ENCODE measurements at regions of chr15 and their contacts with region 1.

Region 1: GRCh38 chr15:79380755-79381497 is 51.2 kb upstream of the MINAR1 start:
- DNase-seq: peak; percentile 78
- ATAC-seq: peak; percentile 70
- H3K4me3 ChIP-seq: no peak overlapping the region
- H3K4me3 Mint-ChIP-seq: no peak overlapping the region
- H3K27ac ChIP-seq: no peak overlapping the region
- H3K27ac Mint-ChIP-seq: no peak overlapping the region
- H3K4me1 ChIP-seq: peaks cover 0 to 4% of the 10 kb centered on the region in 2 donors
- H3K4me1 Mint-ChIP-seq: no peaks in the 10 kb centered on the region
- H3K27me3 ChIP-seq: no peaks in the 10 kb centered on the region
- H3K27me3 Mint-ChIP-seq: no peaks in the 10 kb centered on the region
- CTCF ChIP-seq: peak; percentile 97

Region 2: DNA sequence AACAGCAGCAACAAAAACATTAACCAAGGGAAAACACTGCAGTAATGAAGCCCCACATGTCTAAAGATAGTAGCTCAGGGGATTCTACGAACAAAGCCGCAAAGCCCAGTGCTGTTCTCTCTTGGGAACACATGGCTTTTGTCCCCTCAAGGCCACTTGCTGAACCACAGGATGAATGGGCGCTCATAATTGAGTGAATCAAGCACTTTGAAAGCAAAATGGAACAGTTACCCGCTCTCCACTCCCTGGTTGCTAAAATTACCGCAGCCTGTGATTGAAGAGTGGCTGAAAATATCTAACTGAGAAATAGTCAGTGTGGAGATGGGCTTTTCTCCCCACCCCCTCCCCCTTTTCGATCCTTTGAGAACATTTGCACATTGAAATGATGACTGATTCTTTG is 329.9 kb before region 1 on chr15:
- CTCF ChIA-PET with region 1: no interaction called
- POLR2A ChIA-PET with region 1: no interaction called
- intact Hi-C with region 1: no loop called
- DNase-seq: no peak
- ATAC-seq: no peak
- H3K4me3 ChIP-seq: no peak overlapping the region
- H3K4me3 Mint-ChIP-seq: no peak overlapping the region
- H3K27ac ChIP-seq: no peak overlapping the region
- H3K27ac Mint-ChIP-seq: no peak overlapping the region
- H3K4me1 ChIP-seq: no peaks in the 10 kb centered on the region
- H3K4me1 Mint-ChIP-seq: no peaks in the 10 kb centered on the region
- H3K27me3 ChIP-seq: peaks cover 0 to 4% (median 0%) of the 10 kb centered on the region in 4 experiments
- H3K27me3 Mint-ChIP-seq: peaks cover 14% of the 10 kb centered on the region
- CTCF ChIP-seq: no peak

Region 3: DNA sequence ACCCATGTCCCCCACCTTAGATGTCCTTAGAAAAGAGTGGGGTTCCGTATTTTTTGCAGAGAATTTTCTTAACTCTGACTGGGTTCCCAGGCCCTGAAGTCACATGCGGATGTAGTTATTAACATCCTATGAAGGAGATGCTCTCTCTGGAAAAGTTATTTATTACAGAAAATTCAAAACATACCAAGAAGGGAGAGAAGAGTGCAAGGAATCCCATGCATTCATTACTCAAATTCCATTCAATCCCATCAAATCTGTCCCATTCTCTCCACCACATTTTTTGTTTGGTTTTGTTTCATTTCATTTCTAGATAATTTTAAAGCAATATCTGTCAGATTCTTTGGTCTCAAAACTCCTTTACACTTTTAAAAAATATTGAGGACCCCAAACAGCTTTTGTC is 132.7 kb before region 1 on chr15:
- CTCF ChIA-PET with region 1: no interaction called
- POLR2A ChIA-PET with region 1: no interaction called
- intact Hi-C with region 1: no loop called
- DNase-seq: no peak
- ATAC-seq: no peak
- H3K4me3 ChIP-seq: no peak overlapping the region
- H3K4me3 Mint-ChIP-seq: no peak overlapping the region
- H3K27ac ChIP-seq: no peak overlapping the region
- H3K27ac Mint-ChIP-seq: no peak overlapping the region
- H3K4me1 ChIP-seq: no peaks in the 10 kb centered on the region
- H3K4me1 Mint-ChIP-seq: no peaks in the 10 kb centered on the region
- H3K27me3 ChIP-seq: peaks cover 0 to under 1% (median 0%) of the 10 kb centered on the region in 4 experiments
- H3K27me3 Mint-ChIP-seq: peaks cover 12% of the 10 kb centered on the region
- CTCF ChIP-seq: no peak

Region 4: DNA sequence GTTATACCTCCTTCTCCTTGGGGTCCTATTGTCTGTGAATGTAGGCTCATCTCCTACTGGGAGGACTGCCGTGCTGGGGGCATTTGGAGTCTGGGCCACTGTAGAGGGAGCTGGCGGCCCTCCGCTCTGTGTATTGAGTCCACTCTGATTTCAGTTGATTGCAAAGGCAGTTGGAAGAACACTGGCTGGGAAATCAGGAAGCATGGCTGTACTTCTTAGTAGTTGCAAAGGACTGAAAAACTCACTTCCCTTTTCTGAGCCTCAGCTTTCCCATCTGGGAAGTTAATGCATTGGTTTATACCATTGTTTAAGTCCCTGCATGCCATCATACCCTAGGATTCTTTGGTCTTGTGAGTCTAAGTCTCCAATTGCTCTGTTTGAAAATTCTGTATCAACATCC is 23.4 kb before region 1 on chr15:
- CTCF ChIA-PET with region 1: no interaction called
- POLR2A ChIA-PET with region 1: no interaction called
- intact Hi-C with region 1: no loop called
- DNase-seq: no peak
- ATAC-seq: no peak
- H3K4me3 ChIP-seq: no peak overlapping the region
- H3K4me3 Mint-ChIP-seq: no peak overlapping the region
- H3K27ac ChIP-seq: no peak overlapping the region
- H3K27ac Mint-ChIP-seq: no peak overlapping the region
- H3K4me1 ChIP-seq: no peaks in the 10 kb centered on the region
- H3K4me1 Mint-ChIP-seq: no peaks in the 10 kb centered on the region
- H3K27me3 ChIP-seq: no peaks in the 10 kb centered on the region
- H3K27me3 Mint-ChIP-seq: no peaks in the 10 kb centered on the region
- CTCF ChIP-seq: no peak

Region 5: GRCh38 chr15:79394231-79394630 is 13.3 kb after region 1 on chr15:
- CTCF ChIA-PET with region 1: interaction called, 20 read pairs
- POLR2A ChIA-PET with region 1: no interaction called
- intact Hi-C with region 1: no loop called
- DNase-seq: no peak
- ATAC-seq: no peak
- H3K4me3 ChIP-seq: no peak overlapping the region
- H3K4me3 Mint-ChIP-seq: no peak overlapping the region
- H3K27ac ChIP-seq: no peak overlapping the region
- H3K27ac Mint-ChIP-seq: no peak overlapping the region
- H3K4me1 ChIP-seq: no peaks in the 10 kb centered on the region
- H3K4me1 Mint-ChIP-seq: no peaks in the 10 kb centered on the region
- H3K27me3 ChIP-seq: no peaks in the 10 kb centered on the region
- H3K27me3 Mint-ChIP-seq: no peaks in the 10 kb centered on the region
- CTCF ChIP-seq: no peak

Region 6: GRCh38 chr15:79853458-79854328 is 472.8 kb after region 1 on chr15:
- CTCF ChIA-PET with region 1: interaction called, 85 read pairs
- POLR2A ChIA-PET with region 1: no interaction called
- intact Hi-C with region 1: loop called (anchors 1 kb)
- DNase-seq: peak; percentile 73
- ATAC-seq: peak; percentile 97
- H3K4me3 ChIP-seq: no peak overlapping the region
- H3K4me3 Mint-ChIP-seq: no peak overlapping the region
- H3K27ac ChIP-seq: no peak overlapping the region
- H3K27ac Mint-ChIP-seq: no peak overlapping the region
- H3K4me1 ChIP-seq: peaks cover 7 to 8% of the 10 kb centered on the region in 2 donors
- H3K4me1 Mint-ChIP-seq: peaks cover 29% of the 10 kb centered on the region
- H3K27me3 ChIP-seq: no peaks in the 10 kb centered on the region
- H3K27me3 Mint-ChIP-seq: no peaks in the 10 kb centered on the region
- CTCF ChIP-seq: peak; percentile 98

Region 7: DNA sequence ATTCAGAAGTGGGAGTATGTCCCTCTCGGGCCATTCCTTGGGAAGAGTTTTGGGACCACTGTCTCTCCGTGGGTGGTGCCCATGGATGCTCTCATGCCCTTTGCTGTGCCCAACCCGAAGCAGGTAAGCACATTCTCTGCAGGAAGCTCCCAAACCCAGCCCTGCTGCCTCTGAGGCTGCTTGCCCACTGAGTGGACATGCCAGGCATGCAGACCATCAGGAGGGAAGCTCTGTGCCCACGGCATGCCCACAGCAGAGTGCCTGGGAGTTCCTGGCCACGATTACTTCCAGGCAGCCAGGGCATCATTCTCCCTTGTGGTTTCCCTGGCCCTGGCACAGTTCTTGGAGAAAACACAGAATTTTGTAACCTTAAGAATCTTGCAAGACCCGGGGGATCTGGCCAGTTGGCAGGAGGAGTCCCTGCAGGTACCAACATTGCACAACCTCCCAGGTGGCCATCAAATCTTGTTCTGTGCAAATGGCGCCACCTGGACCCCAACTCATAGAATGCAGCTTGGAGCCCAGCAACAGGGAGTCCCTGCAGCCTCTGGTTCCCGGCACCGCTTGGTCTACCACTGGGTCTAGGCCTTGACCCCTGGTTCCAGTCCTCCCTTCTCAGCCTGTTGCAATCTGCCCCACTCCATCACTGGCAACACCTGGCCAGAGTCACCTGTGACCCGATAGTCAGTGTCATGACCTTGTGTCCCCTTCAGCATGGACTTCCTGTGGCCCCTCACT is 792.3 kb after region 1 on chr15:
- CTCF ChIA-PET with region 1: interaction called, 183 read pairs
- POLR2A ChIA-PET with region 1: interaction called, 4 read pairs
- intact Hi-C with region 1: no loop called
- DNase-seq: peak; percentile 72
- ATAC-seq: peak; percentile 84
- H3K4me3 ChIP-seq: no peak overlapping the region
- H3K4me3 Mint-ChIP-seq: no peak overlapping the region
- H3K27ac ChIP-seq: no peak overlapping the region
- H3K27ac Mint-ChIP-seq: no peak overlapping the region
- H3K4me1 ChIP-seq: no peaks in the 10 kb centered on the region
- H3K4me1 Mint-ChIP-seq: no peaks in the 10 kb centered on the region
- H3K27me3 ChIP-seq: no peaks in the 10 kb centered on the region
- H3K27me3 Mint-ChIP-seq: no peaks in the 10 kb centered on the region
- CTCF ChIP-seq: peak; percentile 82

Measured in B cell (primary cell).